ENCODE measurements at regions of chr1 and their contacts with region 1.

Region 1: DNA sequence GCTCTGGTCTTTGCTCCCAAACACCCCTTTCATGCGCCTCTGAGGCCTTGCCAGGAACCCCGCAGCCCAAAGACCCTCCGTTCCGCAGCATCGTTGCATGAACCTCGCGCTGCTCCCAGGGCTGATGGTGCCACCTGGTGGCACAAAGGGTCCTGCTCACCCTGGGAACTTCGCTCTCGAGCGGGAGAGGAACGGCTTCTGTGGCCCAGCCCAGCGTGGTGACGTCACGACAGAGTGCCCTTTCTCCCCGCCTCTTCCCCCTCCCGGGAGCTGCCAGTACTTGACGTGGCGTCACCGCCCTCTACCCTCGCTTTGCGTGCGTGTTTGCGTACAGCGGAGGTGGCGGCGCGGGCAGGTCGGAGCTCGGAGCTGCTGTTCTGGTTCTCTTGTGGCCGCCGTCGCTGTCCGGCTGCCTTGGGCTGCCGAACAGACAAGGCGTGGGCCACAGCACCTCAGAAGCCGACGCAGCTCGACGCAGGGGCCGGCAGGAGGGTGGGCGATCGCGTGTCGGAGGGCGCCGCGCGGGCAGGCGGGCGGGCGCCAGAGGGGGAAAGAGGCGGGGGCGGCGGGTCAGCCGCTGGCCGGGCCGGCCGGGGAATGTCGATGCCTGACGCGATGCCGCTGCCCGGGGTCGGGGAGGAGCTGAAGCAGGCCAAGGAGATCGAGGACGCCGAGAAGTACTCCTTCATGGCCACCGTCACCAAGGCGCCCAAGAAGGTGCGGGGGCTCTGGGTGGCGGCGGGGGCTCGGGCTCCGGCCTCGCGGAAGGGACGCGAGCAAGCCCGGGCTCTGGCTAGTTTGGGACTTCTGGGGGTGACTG is at the start of gene AHCYL1:
- DNase-seq: peak; percentile 100
- CTCF ChIP-seq: peak; percentile 97

Region 2: DNA sequence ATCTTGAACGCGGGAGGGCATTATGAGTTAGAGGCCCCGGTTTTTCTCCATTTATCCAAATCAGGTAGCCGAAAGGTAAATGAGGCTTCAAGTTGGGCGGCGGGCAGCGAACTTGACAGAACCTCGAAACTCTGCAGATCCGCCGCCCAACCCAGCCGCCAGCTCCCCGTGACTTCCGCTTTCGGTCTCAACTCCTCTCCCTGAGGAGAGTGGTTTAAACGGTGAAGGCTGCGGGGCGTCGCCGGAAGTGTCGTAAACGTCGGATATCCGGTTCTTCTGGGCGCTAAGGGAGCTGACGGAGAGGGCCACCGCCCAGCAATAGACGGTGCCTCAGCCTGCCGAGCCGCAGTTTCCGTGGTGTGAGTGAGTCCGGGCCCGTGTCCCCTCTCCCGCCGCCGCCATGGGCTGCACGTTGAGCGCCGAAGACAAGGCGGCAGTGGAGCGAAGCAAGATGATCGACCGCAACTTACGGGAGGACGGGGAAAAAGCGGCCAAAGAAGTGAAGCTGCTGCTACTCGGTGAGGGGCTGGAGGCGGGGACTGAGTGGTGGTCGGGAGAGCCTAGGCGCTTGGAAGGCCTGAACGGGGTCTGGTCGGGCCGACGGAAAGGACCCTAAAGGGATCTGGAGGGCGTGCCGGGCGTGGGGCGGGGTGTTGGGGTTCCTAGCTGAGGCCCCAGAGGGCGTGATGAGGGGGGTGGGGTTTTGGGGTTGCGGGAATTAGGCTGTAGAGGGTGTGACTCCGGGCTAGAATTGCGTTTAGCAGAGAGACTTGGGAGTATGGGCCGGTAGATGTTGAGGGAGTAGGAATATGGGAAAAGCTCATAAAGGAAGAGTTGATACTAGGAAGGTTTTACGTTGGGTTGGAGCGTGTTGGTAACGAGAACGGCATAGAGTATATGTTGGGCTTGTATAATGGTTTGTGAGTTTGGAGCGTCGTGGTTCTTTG is 436.1 kb before region 1 on chr1 and contains the start of gene GNAI3:
- in situ Hi-C with region 1: loop called (anchors 25 kb)
- DNase-seq: peak; percentile 92
- CTCF ChIP-seq: no peak

Region 3: DNA sequence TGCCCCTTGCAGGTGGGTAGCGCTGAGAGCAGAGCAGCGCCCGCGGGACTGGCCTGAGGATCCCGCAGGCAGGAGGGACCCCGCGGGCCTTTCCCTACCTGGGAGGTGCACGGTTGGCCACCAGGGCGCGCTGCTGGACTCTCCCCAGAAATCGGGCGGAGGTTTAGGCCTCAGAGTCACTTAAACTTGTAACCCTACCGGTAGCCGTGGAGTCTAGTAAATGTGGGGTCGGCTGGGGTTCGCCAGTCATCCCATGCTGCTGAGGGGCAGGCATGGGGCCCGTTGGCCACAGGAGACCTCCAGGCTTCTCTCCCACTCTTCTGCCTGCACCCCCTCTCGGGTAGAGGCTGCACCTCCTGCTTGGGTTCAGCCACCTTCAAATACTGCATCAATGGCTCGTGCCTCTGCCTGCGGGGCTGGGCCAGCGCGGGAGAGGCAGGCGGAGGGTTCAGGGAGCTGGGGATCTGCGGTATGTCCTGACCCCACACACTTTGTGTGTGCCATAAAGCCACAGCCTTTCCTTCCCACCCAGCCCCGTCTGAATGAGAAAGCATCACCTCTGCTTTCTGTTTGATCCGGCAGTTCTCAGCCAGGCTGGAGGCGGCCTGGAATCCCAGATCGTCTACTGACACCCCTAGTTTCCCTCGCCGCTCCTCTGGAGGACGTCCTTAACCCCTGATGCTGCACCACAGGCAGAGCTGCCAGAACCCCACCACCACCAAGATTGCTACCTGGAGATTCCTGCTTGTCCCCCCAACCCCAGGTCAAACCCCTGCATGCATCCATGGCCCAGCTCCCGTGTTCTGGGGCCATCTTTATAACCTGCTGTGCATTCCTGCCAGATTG is 341.1 kb before region 1 on chr1:
- in situ Hi-C with region 1: loop called (anchors 10 kb)
- DNase-seq: peak; percentile 82
- CTCF ChIP-seq: peak; percentile 96

Measured in GM13977 (cell line).